Activated naive CD4-positive, alpha-beta T cell treated with anti-CD3 and anti-CD28 coated beads for 36 hours (primary cell): ENCODE measurements at regions of chr5 and their contacts with region 1.

Region 1: DNA sequence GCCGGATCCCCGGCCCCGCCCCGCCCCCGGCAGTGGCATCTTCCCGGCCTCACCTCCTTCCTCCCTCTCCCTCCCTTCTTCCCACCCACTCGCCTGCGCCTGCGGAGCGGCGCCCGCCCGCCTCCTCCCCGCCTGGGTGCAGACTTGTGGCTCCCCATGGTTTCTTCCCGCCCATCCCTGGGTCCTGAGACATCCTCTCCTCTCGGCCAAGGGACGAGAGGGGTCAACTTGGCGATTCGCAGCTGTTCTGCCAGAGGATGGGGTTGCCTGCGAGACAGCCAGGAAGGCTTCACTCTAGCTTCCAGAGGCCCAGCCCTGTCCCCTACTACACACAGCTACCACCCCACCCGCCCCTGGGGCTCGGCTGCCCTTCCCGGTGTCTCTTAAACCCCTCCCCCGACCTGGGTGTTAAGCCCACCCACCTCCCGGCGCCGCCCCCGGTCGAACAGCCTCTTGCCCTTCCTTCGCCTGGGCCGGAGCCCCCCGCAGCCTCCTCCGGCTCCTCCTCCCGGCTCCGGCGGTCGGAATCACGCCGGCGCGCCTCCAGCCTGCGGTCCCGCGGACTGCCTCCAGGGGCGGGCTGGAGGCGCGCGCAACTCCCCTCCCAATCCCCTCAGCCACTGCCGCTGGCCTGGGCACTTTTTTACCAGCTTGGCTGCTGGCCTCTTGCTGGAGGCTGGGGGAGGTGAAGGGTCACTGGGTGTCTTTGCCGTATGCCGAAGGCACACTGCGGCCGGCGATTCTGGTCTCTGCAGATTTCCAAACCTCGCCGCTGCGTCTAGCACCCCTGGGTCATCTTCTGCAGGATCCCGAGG is 1.9 kb downstream of the JADE2 start:
- DNase-seq: peak; percentile 78
- H3K4me3 Mint-ChIP-seq: peak overlapping the region; percentile 88
- H3K27ac Mint-ChIP-seq: peak overlapping the region; percentile 95
- H3K4me1 Mint-ChIP-seq: peaks cover 46% of the 10 kb centered on the region
- H3K27me3 Mint-ChIP-seq: no peaks in the 10 kb centered on the region

Region 2: GRCh38 chr5:134113902-134114875 is 413.2 kb before region 1 on chr5 and contains the start of gene TCF7:
- CTCF ChIA-PET with region 1: no interaction called
- intact Hi-C with region 1: loop called (anchors 5 kb)
- DNase-seq: peak; percentile 81
- H3K4me3 Mint-ChIP-seq: peak within 1 kb of the TSS; percentile 81
- H3K27ac Mint-ChIP-seq: peak within 1 kb of the TSS; percentile 91
- H3K4me1 Mint-ChIP-seq: peaks cover 64% of the 10 kb centered on the region
- H3K27me3 Mint-ChIP-seq: no peaks in the 10 kb centered on the region
- total RNA-seq, gene TCF7: 87.9 to 92.3 TPM

Region 3: GRCh38 chr5:134411546-134412266 is 115.6 kb before region 1 on chr5 and contains the start of gene CDKN2AIPNL:
- CTCF ChIA-PET with region 1: interaction called, 9 read pairs
- intact Hi-C with region 1: loop called (anchors 1 kb)
- DNase-seq: peak; percentile 94
- H3K4me3 Mint-ChIP-seq: peak within 1 kb of the TSS; percentile 96
- H3K27ac Mint-ChIP-seq: peak within 1 kb of the TSS; percentile 88
- H3K4me1 Mint-ChIP-seq: peaks cover 34% of the 10 kb centered on the region
- H3K27me3 Mint-ChIP-seq: no peaks in the 10 kb centered on the region
- total RNA-seq, gene CDKN2AIPNL: 31.1 to 31.5 TPM

Region 4: DNA sequence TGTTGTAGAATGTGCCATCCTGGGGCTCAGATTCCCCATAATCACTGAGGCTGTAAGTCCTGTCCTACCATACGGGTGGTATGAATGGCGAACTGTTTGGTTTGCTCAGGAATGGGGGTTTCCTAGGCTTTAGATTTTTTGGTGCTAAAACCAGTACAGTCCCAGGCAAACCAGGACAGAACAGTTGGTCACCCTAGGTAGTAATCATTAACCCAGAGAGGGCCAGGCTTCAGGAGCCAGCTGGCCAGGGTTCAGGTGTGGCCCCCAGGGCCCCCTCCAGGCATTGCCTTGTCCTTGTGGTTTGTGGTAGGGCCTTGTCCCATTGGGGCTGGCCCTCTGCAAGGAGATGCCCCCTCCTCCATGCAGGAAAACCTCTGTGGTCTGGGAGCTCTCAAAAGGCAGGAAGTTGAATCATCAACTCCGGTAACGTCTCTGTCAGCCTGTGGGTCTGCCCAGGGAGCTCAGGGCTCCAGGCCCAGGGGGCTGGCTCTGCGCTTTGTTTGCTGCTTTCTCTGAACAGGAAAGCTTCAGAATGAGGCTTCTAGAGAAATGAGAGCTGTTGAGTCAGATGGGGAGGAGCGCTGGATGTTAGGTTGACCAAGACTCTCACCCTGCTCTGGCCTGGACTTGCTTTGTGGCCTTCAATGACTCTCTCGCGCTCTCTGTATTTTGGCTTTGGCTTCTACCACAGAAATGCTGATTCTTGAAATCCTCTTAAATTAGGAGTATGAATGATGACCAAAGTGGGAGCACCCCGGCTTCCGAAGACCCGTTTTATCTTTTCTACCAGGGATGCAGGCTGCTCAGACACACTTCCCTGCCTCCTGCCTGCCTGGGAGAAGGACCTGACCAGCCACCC is 24.0 kb before region 1 on chr5:
- CTCF ChIA-PET with region 1: interaction called, 5 read pairs
- intact Hi-C with region 1: loop called (anchors 1 kb)
- DNase-seq: peak; percentile 91
- H3K4me3 Mint-ChIP-seq: peak overlapping the region; percentile 30
- H3K27ac Mint-ChIP-seq: peak overlapping the region; percentile 92
- H3K4me1 Mint-ChIP-seq: peaks cover 33% of the 10 kb centered on the region
- H3K27me3 Mint-ChIP-seq: no peaks in the 10 kb centered on the region

Region 5: DNA sequence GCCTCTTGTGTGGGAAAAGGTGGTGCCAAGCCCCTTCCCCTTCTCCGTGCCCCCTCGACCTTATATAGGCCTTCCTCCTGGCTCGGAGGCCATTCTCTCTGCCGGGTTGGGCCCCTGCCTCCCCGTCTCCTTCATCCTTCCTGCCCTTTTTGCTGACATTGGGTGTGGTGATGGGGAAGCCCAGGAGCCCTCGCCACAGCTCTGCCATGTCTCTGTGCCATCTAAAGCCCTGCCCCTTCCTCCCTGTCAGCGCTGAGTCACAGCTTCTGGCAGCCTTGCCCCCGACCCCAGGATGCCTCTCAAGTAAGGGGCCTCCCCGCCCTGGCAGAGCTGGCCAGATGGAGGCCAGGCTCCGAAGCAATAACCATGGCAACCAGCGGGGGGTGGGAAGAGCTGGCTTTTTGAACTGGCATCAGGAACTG is 28.5 kb after region 1 on chr5:
- CTCF ChIA-PET with region 1: interaction called, 14 read pairs
- intact Hi-C with region 1: loop called (anchors 1 kb)
- DNase-seq: peak; percentile 98
- H3K4me3 Mint-ChIP-seq: peak overlapping the region; percentile 80
- H3K27ac Mint-ChIP-seq: peak overlapping the region; percentile 100
- H3K4me1 Mint-ChIP-seq: peaks cover 38% of the 10 kb centered on the region
- H3K27me3 Mint-ChIP-seq: no peaks in the 10 kb centered on the region

Region 6: GRCh38 chr5:134637161-134637582 is 109.8 kb after region 1 on chr5:
- CTCF ChIA-PET with region 1: no interaction called
- intact Hi-C with region 1: no loop called
- DNase-seq: no peak
- H3K4me3 Mint-ChIP-seq: no peak overlapping the region
- H3K27ac Mint-ChIP-seq: no peak overlapping the region
- H3K4me1 Mint-ChIP-seq: peaks cover 7% of the 10 kb centered on the region
- H3K27me3 Mint-ChIP-seq: no peaks in the 10 kb centered on the region

Region 7: GRCh38 chr5:134758504-134759341 is 231.4 kb after region 1 on chr5 and contains the start of gene DDX46:
- CTCF ChIA-PET with region 1: no interaction called
- intact Hi-C with region 1: loop called (anchors 5 kb)
- DNase-seq: peak; percentile 97
- H3K4me3 Mint-ChIP-seq: peak within 1 kb of the TSS; percentile 99
- H3K27ac Mint-ChIP-seq: peak within 1 kb of the TSS; percentile 80
- H3K4me1 Mint-ChIP-seq: peaks cover 34% of the 10 kb centered on the region
- H3K27me3 Mint-ChIP-seq: no peaks in the 10 kb centered on the region
- total RNA-seq, gene DDX46: 47.3 to 48.0 TPM